ENCODE measurements at regions of chr12 and their contacts with region 1.

Region 1: DNA sequence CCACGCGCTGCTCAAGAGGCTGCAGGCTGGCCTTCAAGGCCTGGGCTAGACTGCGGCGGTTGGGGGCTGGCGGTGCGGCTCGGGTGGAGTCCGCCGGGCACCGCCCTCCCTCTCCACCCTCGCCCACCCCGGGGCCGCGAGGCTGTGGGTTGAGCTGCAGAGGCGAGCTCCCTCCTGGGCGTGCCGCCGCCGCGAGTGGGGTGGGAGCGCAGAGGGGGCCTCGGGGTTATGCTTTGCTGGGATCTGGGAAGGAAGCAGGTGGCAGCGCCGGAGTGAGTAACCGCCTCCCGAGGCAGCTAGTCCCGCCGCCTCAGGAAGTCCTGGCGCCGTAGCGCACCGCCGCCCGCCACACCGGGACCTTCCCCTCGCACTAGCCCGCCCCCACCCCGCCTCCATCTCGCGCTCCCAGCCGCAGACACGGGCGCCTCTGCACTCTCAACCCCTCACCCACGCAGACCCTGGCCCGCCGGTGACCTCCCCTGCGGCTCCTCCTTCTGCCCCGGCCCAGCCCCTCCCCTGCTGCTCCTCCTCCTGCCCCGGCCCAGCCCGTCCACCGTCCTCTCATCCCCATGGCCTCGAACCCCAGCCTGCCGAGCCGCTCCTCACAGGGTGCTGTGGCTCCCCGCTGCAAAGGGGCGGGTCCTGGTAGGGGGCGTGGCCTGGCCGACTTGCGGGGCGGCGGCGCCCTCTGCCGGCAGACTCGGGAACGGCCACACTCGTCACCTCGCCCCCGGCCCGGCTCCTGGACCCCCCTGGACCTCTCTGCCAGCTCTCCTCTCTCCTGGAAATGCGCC is 16.6 kb downstream of the TAMALIN start:
- DNase-seq: peak; percentile 97
- ATAC-seq: peak; percentile 55
- H3K4me3 Mint-ChIP-seq: peak overlapping the region; percentile 91
- H3K27ac Mint-ChIP-seq: peak overlapping the region; percentile 97
- H3K4me1 Mint-ChIP-seq: peaks cover 30% of the 10 kb centered on the region
- H3K27me3 Mint-ChIP-seq: no peaks in the 10 kb centered on the region

Region 2: GRCh38 chr12:51994959-51995358 is 28.4 kb before region 1 on chr12:
- POLR2A ChIA-PET with region 1: interaction called, 64 read pairs
- DNase-seq: no peak
- ATAC-seq: no peak
- H3K4me3 Mint-ChIP-seq: no peak overlapping the region
- H3K27ac Mint-ChIP-seq: no peak overlapping the region
- H3K4me1 Mint-ChIP-seq: peaks cover 10% of the 10 kb centered on the region
- H3K27me3 Mint-ChIP-seq: no peaks in the 10 kb centered on the region

Region 3: GRCh38 chr12:52041695-52042123 is 18.3 kb after region 1 on chr12:
- POLR2A ChIA-PET with region 1: interaction called, 10 read pairs
- DNase-seq: peak; percentile 55
- ATAC-seq: peak; percentile 41
- H3K4me3 Mint-ChIP-seq: peak overlapping the region; percentile 71
- H3K27ac Mint-ChIP-seq: peak overlapping the region; percentile 87
- H3K4me1 Mint-ChIP-seq: peaks cover 31% of the 10 kb centered on the region
- H3K27me3 Mint-ChIP-seq: peaks cover 3% of the 10 kb centered on the region

Region 4: GRCh38 chr12:52055781-52056711 is 32.7 kb after region 1 on chr12:
- POLR2A ChIA-PET with region 1: interaction called, 28 read pairs
- DNase-seq: no peak
- ATAC-seq: no peak
- H3K4me3 Mint-ChIP-seq: no peak overlapping the region
- H3K27ac Mint-ChIP-seq: no peak overlapping the region
- H3K4me1 Mint-ChIP-seq: peaks cover 16% of the 10 kb centered on the region
- H3K27me3 Mint-ChIP-seq: no peaks in the 10 kb centered on the region

Region 5: GRCh38 chr12:52082988-52083637 is 59.7 kb after region 1 on chr12:
- POLR2A ChIA-PET with region 1: interaction called, 30 read pairs
- DNase-seq: peak; percentile 84
- ATAC-seq: peak; percentile 66
- H3K4me3 Mint-ChIP-seq: no peak overlapping the region
- H3K27ac Mint-ChIP-seq: peak overlapping the region; percentile 20
- H3K4me1 Mint-ChIP-seq: peaks cover 8% of the 10 kb centered on the region
- H3K27me3 Mint-ChIP-seq: peaks cover 14% of the 10 kb centered on the region

Measured in activated naive CD8-positive, alpha-beta T cell treated with anti-CD3 and anti-CD28 coated beads, Interleukin-2, amount 10 ng/mL, durations not matched to agents 7 days and 5 days (primary cell).